Caco-2 (cell line): ENCODE measurements at regions of chr12 and their contacts with region 1.

Region 1: DNA sequence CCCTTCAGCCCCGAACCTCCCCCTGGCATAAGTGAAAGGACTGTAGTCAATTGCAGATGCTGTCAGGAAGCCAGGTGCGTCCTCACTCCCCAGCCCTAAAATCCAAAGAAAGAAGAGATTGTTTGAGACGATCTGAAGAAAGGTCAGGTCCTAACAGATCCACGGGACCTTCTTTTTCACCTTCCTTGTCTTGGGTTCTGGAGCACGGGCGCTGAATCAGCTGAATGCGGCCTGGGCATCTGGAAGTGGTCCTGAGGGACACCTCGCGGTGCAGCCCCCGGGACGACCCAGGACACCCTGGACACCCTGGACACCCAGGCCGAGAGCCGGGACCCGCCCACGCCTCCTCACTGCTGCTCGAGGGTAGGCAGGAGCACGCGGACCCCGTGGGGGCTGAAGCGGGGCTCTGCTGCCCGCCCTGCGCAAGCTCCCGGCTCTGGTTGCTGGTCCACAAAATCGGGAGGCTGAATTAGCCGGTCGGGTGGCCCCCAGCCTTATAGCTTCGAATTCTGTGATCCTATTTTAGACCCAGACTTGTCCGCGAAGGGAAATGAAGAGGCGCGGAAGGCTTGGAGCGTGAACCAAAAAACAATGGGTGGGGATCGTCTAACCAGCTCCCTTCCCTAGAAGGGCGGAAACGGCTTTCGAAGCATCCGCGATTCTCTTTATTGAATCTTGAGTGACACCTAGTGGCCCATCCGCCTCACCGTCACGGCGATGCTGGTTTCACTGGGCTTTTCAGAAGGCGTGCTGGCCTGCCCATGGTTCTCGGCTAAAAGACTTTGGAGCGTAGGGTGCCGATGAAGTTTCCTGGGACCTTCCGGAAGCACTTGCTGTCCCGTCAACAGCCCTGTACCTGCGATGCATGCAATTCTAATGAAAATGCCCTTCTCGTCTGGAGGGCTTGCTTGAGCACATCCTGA is 46.4 kb upstream of the PLXNC1 start:
- DNase-seq: peak; percentile 82 to 85
- H3K4me3 ChIP-seq: peak overlapping the region; percentile 50
- H3K4me3 Mint-ChIP-seq: peak overlapping the region; percentile 79
- H3K27ac Mint-ChIP-seq: no peak overlapping the region
- H3K4me1 ChIP-seq: peaks cover 28% of the 10 kb centered on the region
- H3K4me1 Mint-ChIP-seq: peaks cover 11% of the 10 kb centered on the region
- H3K27me3 ChIP-seq: no peaks in the 10 kb centered on the region
- H3K27me3 Mint-ChIP-seq: no peaks in the 10 kb centered on the region
- CTCF ChIP-seq: peak; percentile 78 to 81

Region 2: DNA sequence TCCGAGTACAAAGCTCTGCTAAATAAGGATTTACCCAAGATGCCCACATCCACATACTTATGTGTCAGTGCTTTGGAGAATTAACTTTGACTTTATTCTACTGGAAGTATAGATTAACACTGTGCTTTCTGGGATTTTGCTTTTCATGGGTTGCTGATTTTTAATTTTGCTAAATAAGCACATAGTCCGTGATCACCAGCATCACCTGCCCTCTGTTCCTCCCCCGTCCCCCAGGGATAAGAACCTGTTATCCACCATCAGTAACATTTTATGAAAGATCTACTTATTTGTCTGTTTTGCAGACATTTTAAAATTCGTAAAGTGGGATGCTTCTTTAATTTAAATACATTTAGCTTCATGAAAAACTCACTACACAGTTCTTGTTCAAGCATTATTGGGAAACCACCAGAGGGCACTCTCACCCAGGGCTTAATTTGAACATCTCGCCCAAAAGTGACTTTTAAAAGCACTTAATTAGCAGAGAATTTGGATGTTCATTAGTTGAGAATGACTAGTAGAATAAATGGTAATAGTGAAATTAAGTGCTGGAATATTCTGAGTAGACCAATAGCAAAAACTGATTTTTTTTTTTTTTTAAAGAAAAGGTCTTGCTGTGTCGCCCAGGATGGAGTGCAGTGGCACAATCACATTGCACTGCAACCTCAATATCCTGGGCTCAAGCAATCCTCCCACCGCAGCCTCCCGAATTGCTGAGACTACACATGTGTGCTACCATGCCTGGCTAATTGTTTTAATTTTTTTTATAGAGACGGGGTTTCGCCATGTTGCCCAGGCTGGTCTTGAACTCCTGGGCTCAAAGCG is 599.0 kb before region 1 on chr12:
- CTCF ChIA-PET with region 1: interaction called, 60 read pairs
- POLR2A ChIA-PET with region 1: no interaction called
- intact Hi-C with region 1: loop called (anchors 2 kb)
- DNase-seq: peak in 1 of 2 experiments; percentile 67
- H3K4me3 ChIP-seq: no peak overlapping the region
- H3K4me3 Mint-ChIP-seq: no peak overlapping the region
- H3K27ac Mint-ChIP-seq: no peak overlapping the region
- H3K4me1 ChIP-seq: no peaks in the 10 kb centered on the region
- H3K4me1 Mint-ChIP-seq: no peaks in the 10 kb centered on the region
- H3K27me3 ChIP-seq: no peaks in the 10 kb centered on the region
- H3K27me3 Mint-ChIP-seq: no peaks in the 10 kb centered on the region
- CTCF ChIP-seq: peak; percentile 75 to 76

Region 3: GRCh38 chr12:93699271-93700145 is 402.5 kb before region 1 on chr12:
- CTCF ChIA-PET with region 1: interaction called, 9 read pairs
- POLR2A ChIA-PET with region 1: no interaction called
- intact Hi-C with region 1: loop called (anchors 5 kb)
- DNase-seq: peak in 1 of 2 experiments; percentile 50
- H3K4me3 ChIP-seq: no peak overlapping the region
- H3K4me3 Mint-ChIP-seq: peak overlapping the region; percentile 79
- H3K27ac Mint-ChIP-seq: peak overlapping the region; percentile 93
- H3K4me1 ChIP-seq: peaks cover 52% of the 10 kb centered on the region
- H3K4me1 Mint-ChIP-seq: peaks cover 45% of the 10 kb centered on the region
- H3K27me3 ChIP-seq: no peaks in the 10 kb centered on the region
- H3K27me3 Mint-ChIP-seq: no peaks in the 10 kb centered on the region
- CTCF ChIP-seq: no peak

Region 4: DNA sequence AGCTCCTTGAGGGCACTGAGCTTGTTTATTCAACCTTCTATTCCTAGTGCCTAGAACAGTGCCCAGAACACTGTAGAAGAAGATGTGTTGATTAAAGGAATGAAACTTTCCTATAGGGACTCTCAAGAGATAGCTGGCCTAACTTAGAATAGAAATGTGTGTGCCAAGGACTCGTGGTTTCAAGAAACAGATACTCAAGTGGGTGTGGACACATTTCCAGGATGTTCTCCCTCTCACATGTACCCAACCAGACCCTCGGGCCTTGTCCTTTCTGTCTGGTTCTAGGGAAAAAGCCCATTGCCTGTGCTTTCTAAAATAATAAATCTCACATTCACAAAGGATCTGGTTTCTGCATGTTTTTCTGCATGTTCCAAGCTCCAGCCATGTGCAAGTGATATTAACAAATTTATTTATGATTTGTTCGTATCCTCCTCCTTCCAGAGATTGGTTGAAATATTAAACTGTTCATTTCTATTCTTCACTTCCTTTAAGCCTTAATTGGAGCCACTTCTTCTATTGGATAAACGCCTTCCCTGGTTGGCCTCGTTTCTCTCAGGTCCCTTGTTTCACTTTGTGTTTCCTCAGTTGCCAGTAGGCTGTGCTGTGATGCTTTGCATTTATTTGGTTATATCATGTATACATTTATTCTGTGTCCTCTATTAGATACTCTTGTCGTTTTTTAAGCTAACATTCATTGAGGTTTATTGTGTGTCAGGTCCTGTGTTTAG is 335.0 kb before region 1 on chr12:
- CTCF ChIA-PET with region 1: interaction called, 5 read pairs
- POLR2A ChIA-PET with region 1: no interaction called
- intact Hi-C with region 1: loop called (anchors 1 kb)
- DNase-seq: no peak
- H3K4me3 ChIP-seq: no peak overlapping the region
- H3K4me3 Mint-ChIP-seq: no peak overlapping the region
- H3K27ac Mint-ChIP-seq: no peak overlapping the region
- H3K4me1 ChIP-seq: peaks cover 8% of the 10 kb centered on the region
- H3K4me1 Mint-ChIP-seq: peaks cover 18% of the 10 kb centered on the region
- H3K27me3 ChIP-seq: no peaks in the 10 kb centered on the region
- H3K27me3 Mint-ChIP-seq: no peaks in the 10 kb centered on the region
- CTCF ChIP-seq: no peak

Region 5: DNA sequence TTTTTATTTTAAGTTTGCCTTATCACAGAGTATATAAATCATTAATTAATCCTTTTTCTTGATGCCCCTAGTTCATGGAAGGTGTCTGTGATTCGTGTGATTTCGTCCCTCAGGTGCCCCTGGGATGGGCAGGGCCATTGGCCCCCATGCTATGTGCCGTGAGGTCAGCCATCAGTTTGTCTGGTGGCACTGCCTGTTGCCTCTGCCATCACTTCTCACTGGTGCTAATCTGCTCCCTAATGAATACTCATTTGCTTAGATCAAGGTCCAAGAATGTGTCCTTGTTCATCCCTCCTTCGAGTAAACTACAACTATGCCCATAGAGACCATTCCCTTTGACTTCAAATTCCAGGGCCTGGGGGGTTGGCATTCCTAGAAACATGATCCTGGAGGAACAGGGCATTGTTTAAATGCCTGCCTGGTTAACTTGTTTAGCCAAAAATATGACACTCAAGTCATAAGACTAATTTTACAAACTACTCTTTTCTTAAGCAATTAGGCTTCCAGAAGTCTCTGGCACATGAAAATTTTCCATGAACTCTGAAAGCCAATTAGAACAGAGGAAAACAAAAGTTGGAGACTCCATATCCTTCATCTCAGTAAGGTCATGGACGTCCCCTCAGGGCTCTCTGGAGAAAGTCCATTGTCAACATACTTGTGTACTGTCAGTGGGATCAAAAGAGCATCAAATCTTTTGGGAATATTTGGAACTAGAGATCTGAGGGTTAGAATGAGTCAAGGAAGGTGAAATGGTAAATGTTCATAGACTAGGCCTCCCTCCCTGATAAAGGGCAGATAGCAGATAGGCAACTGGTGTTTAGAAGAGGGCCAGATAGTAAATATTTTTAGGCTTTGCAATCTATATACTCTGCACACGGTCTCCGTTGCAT is 44.5 kb before region 1 on chr12:
- CTCF ChIA-PET with region 1: no interaction called
- POLR2A ChIA-PET with region 1: no interaction called
- intact Hi-C with region 1: no loop called
- DNase-seq: peak; percentile 72 to 74
- H3K4me3 ChIP-seq: no peak overlapping the region
- H3K4me3 Mint-ChIP-seq: no peak overlapping the region
- H3K27ac Mint-ChIP-seq: peak overlapping the region; percentile 19
- H3K4me1 ChIP-seq: peaks cover 29% of the 10 kb centered on the region
- H3K4me1 Mint-ChIP-seq: peaks cover 18% of the 10 kb centered on the region
- H3K27me3 ChIP-seq: no peaks in the 10 kb centered on the region
- H3K27me3 Mint-ChIP-seq: no peaks in the 10 kb centered on the region
- CTCF ChIP-seq: no peak

Region 6: DNA sequence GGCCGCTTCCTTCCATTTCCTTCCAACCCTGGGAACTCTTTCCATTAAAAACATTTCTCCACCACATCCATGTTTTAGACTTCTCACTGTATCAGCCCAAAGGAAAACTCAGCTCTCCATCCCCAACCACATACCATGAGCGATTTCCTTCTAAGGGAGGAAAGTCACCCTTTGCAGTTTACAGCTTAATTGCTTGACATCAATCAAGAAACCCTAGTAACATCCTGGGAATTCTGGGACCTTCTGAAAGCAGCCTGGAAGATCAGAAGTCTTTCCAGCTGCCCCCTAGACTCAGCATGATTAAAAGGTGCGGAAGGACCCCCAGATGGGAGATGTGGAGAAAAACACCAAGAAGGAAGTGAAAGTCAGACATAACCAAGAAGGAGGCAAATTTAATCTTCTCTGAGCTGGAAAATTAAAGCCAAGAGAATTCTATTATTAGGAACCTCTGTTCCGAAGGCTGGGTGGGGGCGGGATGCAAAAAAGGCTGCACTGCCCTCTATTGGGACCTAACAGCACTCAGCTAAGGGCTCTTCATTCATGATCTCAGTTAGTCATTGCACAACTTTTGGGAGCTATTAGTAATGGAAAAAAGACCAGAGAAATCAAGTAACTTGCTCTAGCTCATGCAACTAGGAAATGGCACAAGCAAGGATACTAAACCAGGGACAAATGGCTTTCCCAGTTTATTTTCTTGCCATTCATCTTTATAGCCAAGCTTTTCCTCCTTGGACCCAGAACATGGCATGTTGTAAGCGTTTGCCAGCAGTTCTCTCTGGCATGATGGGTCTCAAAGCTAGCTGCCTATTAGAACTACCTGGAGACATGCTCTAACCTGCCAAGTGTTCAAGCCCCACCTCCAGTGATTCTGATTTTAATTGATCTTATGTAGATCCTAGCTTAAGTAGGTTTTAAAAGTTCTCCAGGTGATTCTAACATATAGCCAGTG is 26.7 kb before region 1 on chr12:
- CTCF ChIA-PET with region 1: interaction called, 28 read pairs
- POLR2A ChIA-PET with region 1: no interaction called
- intact Hi-C with region 1: no loop called
- DNase-seq: peak in 1 of 2 experiments; percentile 35
- H3K4me3 ChIP-seq: no peak overlapping the region
- H3K4me3 Mint-ChIP-seq: no peak overlapping the region
- H3K27ac Mint-ChIP-seq: no peak overlapping the region
- H3K4me1 ChIP-seq: peaks cover 24% of the 10 kb centered on the region
- H3K4me1 Mint-ChIP-seq: peaks cover 29% of the 10 kb centered on the region
- H3K27me3 ChIP-seq: no peaks in the 10 kb centered on the region
- H3K27me3 Mint-ChIP-seq: no peaks in the 10 kb centered on the region
- CTCF ChIP-seq: peak; percentile 44 to 62

Region 7: DNA sequence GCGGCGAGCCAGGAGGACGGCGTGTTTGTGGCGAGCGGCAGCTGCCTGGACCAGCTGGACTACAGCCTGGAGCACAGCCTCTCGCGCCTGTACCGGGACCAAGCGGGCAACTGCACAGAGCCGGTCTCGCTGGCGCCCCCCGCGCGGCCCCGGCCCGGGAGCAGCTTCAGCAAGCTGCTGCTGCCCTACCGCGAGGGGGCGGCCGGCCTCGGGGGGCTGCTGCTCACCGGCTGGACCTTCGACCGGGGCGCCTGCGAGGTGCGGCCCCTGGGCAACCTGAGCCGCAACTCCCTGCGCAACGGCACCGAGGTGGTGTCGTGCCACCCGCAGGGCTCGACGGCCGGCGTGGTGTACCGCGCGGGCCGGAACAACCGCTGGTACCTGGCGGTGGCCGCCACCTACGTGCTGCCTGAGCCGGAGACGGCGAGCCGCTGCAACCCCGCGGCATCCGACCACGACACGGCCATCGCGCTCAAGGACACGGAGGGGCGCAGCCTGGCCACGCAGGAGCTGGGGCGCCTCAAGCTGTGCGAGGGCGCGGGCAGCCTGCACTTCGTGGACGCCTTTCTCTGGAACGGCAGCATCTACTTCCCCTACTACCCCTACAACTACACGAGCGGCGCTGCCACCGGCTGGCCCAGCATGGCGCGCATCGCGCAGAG is 47.3 kb after region 1 on chr12:
- CTCF ChIA-PET with region 1: no interaction called
- POLR2A ChIA-PET with region 1: no interaction called
- intact Hi-C with region 1: no loop called
- DNase-seq: peak; percentile 69 to 84
- H3K4me3 ChIP-seq: peak overlapping the region; percentile 82
- H3K4me3 Mint-ChIP-seq: peak overlapping the region; percentile 88
- H3K27ac Mint-ChIP-seq: peak overlapping the region; percentile 47
- H3K4me1 ChIP-seq: peaks cover 45% of the 10 kb centered on the region
- H3K4me1 Mint-ChIP-seq: peaks cover 35% of the 10 kb centered on the region
- H3K27me3 ChIP-seq: no peaks in the 10 kb centered on the region
- H3K27me3 Mint-ChIP-seq: no peaks in the 10 kb centered on the region
- CTCF ChIP-seq: peak; percentile 46 to 56

Region 8: DNA sequence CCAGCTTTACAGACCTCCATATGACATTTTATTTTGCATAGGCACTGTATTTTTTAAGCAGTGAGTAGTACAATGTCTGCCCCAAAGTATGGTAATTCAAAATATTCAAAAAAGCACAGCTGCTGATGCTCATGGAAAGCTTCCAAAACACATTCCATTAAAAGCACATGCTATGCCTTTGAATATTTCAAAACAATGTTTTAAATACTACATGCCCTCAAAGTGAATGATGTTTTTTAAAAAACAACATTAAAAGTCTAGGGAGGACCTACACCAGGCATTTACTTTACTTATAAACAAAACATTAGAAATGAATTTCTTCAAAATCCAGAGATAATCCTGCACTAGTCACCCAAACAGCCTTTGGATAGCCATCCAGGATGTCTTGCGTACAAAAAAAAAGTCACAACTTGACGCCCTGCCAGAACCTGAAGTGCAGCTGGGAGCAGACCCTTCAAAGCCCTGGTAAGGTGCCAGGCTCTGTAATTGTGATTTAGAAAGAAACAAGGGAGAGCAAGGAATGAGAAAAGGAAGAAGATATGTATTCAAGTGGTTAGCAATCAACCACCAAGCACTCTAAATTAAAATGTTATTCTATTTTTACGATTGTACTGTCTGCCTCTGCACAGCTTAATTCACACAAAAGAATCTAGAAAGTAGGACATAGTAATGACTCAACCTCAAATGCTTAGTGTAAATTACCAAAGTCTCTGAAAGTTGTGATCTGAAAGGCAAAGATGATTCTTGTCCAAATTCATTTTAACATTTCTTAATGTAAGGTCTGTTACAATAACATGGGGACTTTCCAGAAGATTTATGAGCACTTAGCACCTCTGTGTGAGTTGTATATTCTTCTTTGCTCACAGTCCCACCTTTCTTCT is 325.7 kb after region 1 on chr12:
- CTCF ChIA-PET with region 1: no interaction called
- POLR2A ChIA-PET with region 1: no interaction called
- intact Hi-C with region 1: no loop called
- DNase-seq: no peak
- H3K4me3 ChIP-seq: no peak overlapping the region
- H3K4me3 Mint-ChIP-seq: no peak overlapping the region
- H3K27ac Mint-ChIP-seq: no peak overlapping the region
- H3K4me1 ChIP-seq: 0 out of 2 replicates have a peak, but pooled peaks cover 5% of the 10 kb centered on the region
- H3K4me1 Mint-ChIP-seq: peaks cover 15% of the 10 kb centered on the region
- H3K27me3 ChIP-seq: no peaks in the 10 kb centered on the region
- H3K27me3 Mint-ChIP-seq: no peaks in the 10 kb centered on the region
- CTCF ChIP-seq: no peak